ENCODE measurements at regions of chr3 and their contacts with region 1.

Region 1: GRCh38 chr3:161559177-161559998 is 62.8 kb downstream of the OTOL1 start:
- DNase-seq: peak in 1 of 35 experiments; percentile 1
- ATAC-seq: no peak
- H3K4me3 ChIP-seq: no peak overlapping the region
- H3K4me3 Mint-ChIP-seq: no peak overlapping the region
- H3K27ac ChIP-seq: no peak overlapping the region
- H3K27ac Mint-ChIP-seq: no peak overlapping the region
- H3K4me1 ChIP-seq: no peaks in the 10 kb centered on the region
- H3K4me1 Mint-ChIP-seq: no peaks in the 10 kb centered on the region
- H3K27me3 ChIP-seq: peaks cover 0 to 4% of the 10 kb centered on the region in 2 experiments
- H3K27me3 Mint-ChIP-seq: peaks cover 3 to 4% of the 10 kb centered on the region in 2 donors

Region 2: GRCh38 chr3:161586556-161587235 is 27.3 kb after region 1 on chr3:
- CTCF ChIA-PET with region 1: interaction called in 1 of 2 experiments, 12 read pairs
- POLR2A ChIA-PET with region 1: no interaction called
- DNase-seq: no peak
- ATAC-seq: no peak
- H3K4me3 ChIP-seq: no peak overlapping the region
- H3K4me3 Mint-ChIP-seq: no peak overlapping the region
- H3K27ac ChIP-seq: no peak overlapping the region
- H3K27ac Mint-ChIP-seq: no peak overlapping the region
- H3K4me1 ChIP-seq: no peaks in the 10 kb centered on the region
- H3K4me1 Mint-ChIP-seq: no peaks in the 10 kb centered on the region
- H3K27me3 ChIP-seq: no peaks in the 10 kb centered on the region
- H3K27me3 Mint-ChIP-seq: no peaks in the 10 kb centered on the region

Region 3: DNA sequence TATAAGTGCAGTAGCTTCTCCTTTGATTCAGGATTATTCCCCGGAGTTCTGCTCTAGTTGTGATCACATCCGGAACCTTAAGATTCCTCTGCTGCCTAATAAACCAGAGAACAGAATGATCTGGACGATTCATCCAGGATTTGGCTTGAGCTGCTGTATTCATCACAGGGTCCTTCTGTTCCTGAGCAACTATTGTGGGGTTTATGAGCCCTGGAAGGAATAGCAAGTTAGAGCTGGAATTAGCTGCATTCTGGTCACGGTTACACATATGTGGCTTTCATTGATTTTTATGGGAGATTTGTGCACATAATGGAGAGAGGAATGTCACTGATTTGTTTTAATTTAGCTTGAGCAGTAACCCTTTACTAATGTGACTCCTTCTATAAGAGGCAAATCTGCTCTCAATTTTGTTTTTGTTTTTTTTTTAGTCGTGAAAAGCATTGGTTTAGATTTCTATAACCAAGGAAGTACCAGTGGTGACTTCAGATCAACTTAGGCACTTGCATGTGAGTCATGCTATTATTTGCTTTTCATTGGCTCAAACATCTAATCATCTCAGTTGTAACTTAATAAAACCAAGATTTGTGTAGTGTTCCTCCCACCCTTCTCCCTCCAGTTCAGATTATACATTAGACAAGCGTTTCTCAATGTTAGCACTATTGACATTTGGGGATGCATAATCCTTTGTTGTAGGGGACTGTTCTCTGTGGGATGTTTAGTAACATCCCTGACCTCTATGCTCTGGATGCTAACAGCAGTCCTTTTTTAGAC is 85.7 kb after region 1 on chr3:
- CTCF ChIA-PET with region 1: interaction called in 1 of 2 experiments, 10 read pairs
- POLR2A ChIA-PET with region 1: no interaction called
- DNase-seq: no peak
- ATAC-seq: no peak
- H3K4me3 ChIP-seq: no peak overlapping the region
- H3K4me3 Mint-ChIP-seq: no peak overlapping the region
- H3K27ac ChIP-seq: no peak overlapping the region
- H3K27ac Mint-ChIP-seq: no peak overlapping the region
- H3K4me1 ChIP-seq: no peaks in the 10 kb centered on the region
- H3K4me1 Mint-ChIP-seq: no peaks in the 10 kb centered on the region
- H3K27me3 ChIP-seq: no peaks in the 10 kb centered on the region
- H3K27me3 Mint-ChIP-seq: peaks cover 0 to 3% of the 10 kb centered on the region in 2 donors

Region 4: DNA sequence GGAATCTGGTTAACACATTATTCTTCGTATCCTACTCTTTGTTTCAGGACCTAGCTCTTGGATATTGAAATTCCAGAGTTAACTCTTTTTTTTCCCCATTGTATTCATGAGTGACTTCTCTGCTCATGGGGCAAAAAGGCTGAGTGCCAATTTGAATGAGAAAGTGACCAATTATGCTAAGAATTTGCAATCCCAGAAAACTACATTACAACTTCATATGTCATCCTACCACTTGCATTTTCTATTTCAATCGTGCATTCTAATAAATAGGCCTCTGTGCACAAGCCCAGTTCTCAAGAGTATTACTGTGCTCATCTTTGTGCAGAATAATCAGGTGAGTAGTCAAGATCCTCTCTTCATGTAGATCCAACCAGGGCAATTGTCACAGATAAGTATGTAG is 475.0 kb after region 1 on chr3:
- CTCF ChIA-PET with region 1: no interaction called
- POLR2A ChIA-PET with region 1: no interaction called
- DNase-seq: no peak
- ATAC-seq: no peak
- H3K4me3 ChIP-seq: no peak overlapping the region
- H3K4me3 Mint-ChIP-seq: no peak overlapping the region
- H3K27ac ChIP-seq: no peak overlapping the region
- H3K27ac Mint-ChIP-seq: no peak overlapping the region
- H3K4me1 ChIP-seq: no peaks in the 10 kb centered on the region
- H3K4me1 Mint-ChIP-seq: no peaks in the 10 kb centered on the region
- H3K27me3 ChIP-seq: no peaks in the 10 kb centered on the region
- H3K27me3 Mint-ChIP-seq: no peaks in the 10 kb centered on the region

Measured in T-cell (primary cell).